HepG2 (cell line): ENCODE measurements at regions of chrX and their contacts with region 1.

Region 1: GRCh38 chrX:71365876-71366673 is at the start of gene TAF1:
- DNase-seq: peak; percentile 96
- ATAC-seq: peak; percentile 95
- H3K4me3 ChIP-seq: peak within 1 kb of the TSS; percentile 76 to 88 (median 87)
- H3K27ac ChIP-seq: peak within 1 kb of the TSS; percentile 92
- H3K4me1 ChIP-seq: peaks cover 24% of the 10 kb centered on the region
- H3K27me3 ChIP-seq: no peaks in the 10 kb centered on the region; a peak in 1 of 5 replicates
- CTCF ChIP-seq: no peak
- EP300 ChIP-seq: no peak
- POLR2A ChIP-seq: peak; percentile 62 to 81; a peak in 3 of 4 replicates
- RAD21 ChIP-seq: no peak
- total RNA-seq, gene TAF1: 17.7 and 20.2 TPM in 2 replicates

Region 2: DNA sequence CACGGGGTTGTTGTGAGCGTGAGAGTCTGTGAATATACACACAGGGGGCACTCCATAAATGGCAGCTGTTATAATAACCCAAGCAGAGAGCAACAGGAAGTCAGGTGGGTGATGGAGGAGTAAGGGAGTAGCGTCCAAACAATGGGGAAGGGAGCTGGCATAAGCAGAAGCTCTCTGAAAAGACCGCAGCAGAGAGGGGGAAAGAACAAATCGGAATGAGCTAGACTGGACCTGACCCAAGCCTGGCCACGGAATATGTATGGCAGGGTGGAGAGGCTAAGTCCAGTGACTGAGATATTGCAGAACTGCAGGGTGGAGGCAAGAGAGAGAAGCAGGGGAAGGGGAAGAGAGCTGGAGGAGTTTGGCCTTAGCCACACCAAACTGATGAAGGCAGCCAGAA is 149.6 kb before region 1 on chrX:
- CTCF ChIA-PET with region 1: no interaction called
- POLR2A ChIA-PET with region 1: interaction called, 10 read pairs
- in situ Hi-C with region 1: no loop called
- intact Hi-C with region 1: no loop called
- DNase-seq: peak; percentile 42
- ATAC-seq: no peak
- H3K4me3 ChIP-seq: peak overlapping the region; percentile 76 to 79 (median 78)
- H3K27ac ChIP-seq: peak overlapping the region; percentile 91
- H3K4me1 ChIP-seq: peaks cover 51% of the 10 kb centered on the region
- H3K27me3 ChIP-seq: no peaks in the 10 kb centered on the region; a peak in 1 of 5 replicates
- CTCF ChIP-seq: no peak
- EP300 ChIP-seq: no peak
- POLR2A ChIP-seq: peak in 1 of 2 experiments; percentile 36; a peak in 1 of 4 replicates
- RAD21 ChIP-seq: no peak

Region 3: GRCh38 chrX:71227370-71228062 is 138.6 kb before region 1 on chrX:
- CTCF ChIA-PET with region 1: no interaction called
- POLR2A ChIA-PET with region 1: interaction called, 19 read pairs
- in situ Hi-C with region 1: no loop called
- intact Hi-C with region 1: no loop called
- DNase-seq: peak; percentile 76
- ATAC-seq: peak; percentile 68
- H3K4me3 ChIP-seq: peak overlapping the region in 2 of 3 experiments; percentile 19 to 50; a peak in 3 of 6 replicates
- H3K27ac ChIP-seq: peak overlapping the region; percentile 100
- H3K4me1 ChIP-seq: peaks cover 92% of the 10 kb centered on the region
- H3K27me3 ChIP-seq: no peaks in the 10 kb centered on the region
- CTCF ChIP-seq: peak; percentile 39
- EP300 ChIP-seq: no peak
- POLR2A ChIP-seq: peak; percentile 58 to 64; a peak in 3 of 4 replicates
- RAD21 ChIP-seq: no peak

Region 4: DNA sequence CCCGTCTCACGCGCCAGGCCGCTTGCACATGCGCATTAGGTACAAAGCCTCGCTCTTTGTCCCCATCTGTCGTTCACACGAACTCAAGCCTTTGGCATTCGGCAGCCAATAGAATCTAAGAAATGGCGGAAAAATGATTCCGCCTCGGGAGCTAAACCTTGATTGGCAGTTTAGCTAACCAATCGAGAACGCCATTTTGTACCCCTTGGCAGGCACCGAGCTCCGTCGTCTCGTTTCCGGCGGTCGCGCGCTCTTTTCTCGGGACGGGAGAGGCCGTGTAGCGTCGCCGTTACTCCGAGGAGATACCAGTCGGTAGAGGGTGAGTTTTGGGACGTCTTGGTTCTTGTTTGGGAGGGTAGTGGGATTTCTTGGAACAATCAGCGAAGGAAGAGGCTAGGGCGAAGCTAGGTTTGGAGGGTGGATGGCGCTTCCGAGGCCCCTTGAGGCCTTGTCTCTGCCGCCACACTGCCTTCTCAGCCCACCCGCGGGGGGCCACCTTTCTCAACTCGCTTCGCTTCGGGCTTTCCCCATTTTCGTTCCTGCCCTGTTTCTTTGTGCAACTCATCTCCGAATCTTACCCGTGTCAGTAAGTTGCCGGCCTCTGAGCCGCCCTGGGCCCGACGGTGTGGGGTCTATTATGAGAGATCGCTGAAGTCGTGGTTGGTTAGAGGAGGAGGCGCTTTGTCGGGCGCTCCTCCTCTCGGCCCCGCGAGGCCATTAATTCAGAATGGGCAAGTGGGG is 82.5 kb before region 1 on chrX and contains the start of gene NONO:
- CTCF ChIA-PET with region 1: no interaction called
- POLR2A ChIA-PET with region 1: interaction called, 31 read pairs
- in situ Hi-C with region 1: no loop called
- intact Hi-C with region 1: loop called (anchors 1 kb)
- DNase-seq: peak; percentile 97
- ATAC-seq: peak; percentile 94
- H3K4me3 ChIP-seq: peak within 1 kb of the TSS; percentile 66 to 81 (median 68)
- H3K27ac ChIP-seq: peak within 1 kb of the TSS; percentile 91
- H3K4me1 ChIP-seq: peaks cover 21% of the 10 kb centered on the region
- H3K27me3 ChIP-seq: no peaks in the 10 kb centered on the region
- CTCF ChIP-seq: peak; percentile 30; the same call in 1 of the 2 replicates
- EP300 ChIP-seq: no peak
- POLR2A ChIP-seq: peak; percentile 62 to 64
- RAD21 ChIP-seq: no peak
- total RNA-seq, gene NONO: 387 and 408 TPM in 2 replicates

Region 5: DNA sequence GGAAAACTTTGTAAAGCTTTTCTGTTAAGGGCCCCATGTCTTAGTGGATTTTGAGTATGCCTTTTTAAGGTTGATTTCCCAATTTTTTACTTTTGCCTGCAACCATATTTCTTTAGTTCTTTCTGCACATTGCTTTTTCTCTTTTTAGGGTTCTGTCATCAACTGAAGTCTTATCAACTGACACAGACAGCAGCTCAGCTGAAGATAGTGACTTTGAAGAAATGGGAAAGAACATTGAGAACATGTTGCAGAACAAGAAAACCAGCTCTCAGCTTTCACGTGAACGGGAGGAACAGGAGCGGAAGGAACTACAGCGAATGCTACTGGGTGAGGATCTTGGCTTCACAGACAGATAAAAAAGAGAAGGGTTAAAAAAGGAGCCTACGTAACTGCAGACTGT is 27.8 kb after region 1 on chrX:
- CTCF ChIA-PET with region 1: no interaction called
- POLR2A ChIA-PET with region 1: interaction called, 12 read pairs
- in situ Hi-C with region 1: no loop called
- intact Hi-C with region 1: loop called (anchors 2 kb)
- DNase-seq: no peak
- ATAC-seq: no peak
- H3K4me3 ChIP-seq: no peak overlapping the region
- H3K27ac ChIP-seq: peak overlapping the region; percentile 63
- H3K4me1 ChIP-seq: peaks cover 34% of the 10 kb centered on the region
- H3K27me3 ChIP-seq: no peaks in the 10 kb centered on the region
- CTCF ChIP-seq: no peak
- EP300 ChIP-seq: no peak
- POLR2A ChIP-seq: no peak
- RAD21 ChIP-seq: no peak

Region 6: DNA sequence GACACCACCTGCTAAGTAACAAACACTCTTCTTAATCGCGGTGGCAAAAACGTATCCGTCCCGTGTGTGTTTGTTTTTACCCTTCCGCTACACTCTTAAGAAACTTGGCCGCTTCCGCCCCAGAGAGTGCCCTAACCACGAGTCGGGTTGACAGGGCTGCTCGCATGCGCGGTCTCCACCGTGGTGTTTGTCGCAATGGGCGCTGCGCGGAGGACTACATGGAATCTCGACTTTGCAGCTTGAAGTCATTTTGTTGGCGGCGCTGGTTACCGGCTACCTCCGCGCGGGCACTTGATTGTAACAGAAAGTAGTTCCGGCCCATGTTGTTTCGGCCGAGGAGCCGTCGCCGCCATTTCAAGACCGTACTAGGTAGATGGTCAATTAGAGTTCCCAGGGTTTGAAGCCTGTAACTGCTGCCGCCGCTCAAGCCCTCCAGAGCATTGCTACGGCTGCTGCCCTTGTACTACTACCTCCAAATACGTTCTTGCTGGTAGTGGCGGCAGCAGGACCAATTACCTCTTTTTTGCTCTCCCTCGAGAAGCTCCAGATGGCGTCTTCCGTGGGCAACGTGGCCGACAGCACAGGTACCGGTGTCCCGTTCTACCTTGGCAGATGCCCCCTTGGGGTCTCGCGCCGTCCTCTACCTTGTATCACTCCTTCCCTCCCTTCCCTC is 166.8 kb after region 1 on chrX and contains the start of gene OGT:
- CTCF ChIA-PET with region 1: no interaction called
- POLR2A ChIA-PET with region 1: interaction called, 21 read pairs
- in situ Hi-C with region 1: no loop called
- intact Hi-C with region 1: no loop called
- DNase-seq: peak; percentile 89
- ATAC-seq: peak; percentile 94
- H3K4me3 ChIP-seq: peak within 1 kb of the TSS; percentile 71 to 83 (median 72)
- H3K27ac ChIP-seq: peak within 1 kb of the TSS; percentile 82
- H3K4me1 ChIP-seq: peaks cover 26% of the 10 kb centered on the region
- H3K27me3 ChIP-seq: no peaks in the 10 kb centered on the region; a peak in 1 of 5 replicates
- CTCF ChIP-seq: no peak
- EP300 ChIP-seq: peak in 1 of 2 experiments; percentile 39; a peak in 1 of 4 replicates
- POLR2A ChIP-seq: peak; percentile 77 to 89
- RAD21 ChIP-seq: no peak
- total RNA-seq, gene OGT: 52.5 and 71.7 TPM in 2 replicates